ENCODE measurements at regions of chr3 and their contacts with region 1.

Region 1: DNA sequence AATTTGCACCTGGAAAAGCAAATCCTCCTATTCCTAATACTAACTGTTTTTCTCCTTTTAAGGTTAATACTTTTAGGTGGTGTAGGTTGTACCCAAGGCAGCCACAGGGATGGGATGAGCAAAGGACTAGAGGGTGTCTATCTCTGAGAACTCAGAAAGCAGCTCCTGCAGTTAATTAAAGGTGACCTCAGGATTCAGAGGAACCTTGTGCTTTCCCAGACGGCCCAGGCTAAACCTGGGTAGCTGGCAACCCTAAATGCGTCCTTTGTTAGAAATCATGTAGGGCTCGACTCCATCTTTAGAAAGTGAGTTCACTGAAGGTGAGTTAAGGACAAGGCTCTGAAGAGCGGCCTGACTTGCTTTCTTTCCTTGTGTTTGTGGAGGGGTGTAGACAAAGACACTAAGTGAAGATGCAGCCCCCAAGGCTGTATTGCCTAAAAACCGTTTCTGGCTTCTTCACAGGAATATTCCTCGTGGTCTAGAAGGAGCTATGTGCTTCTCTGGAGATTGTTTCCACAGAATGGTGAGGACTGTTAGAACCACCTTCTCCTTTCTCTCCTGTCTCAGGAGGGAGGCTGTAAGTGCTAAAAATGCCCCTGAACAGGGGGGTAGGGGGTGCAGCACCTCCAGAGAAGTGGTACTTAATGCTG is 14.9 kb downstream of the FNDC3B start:
- DNase-seq: no peak
- H3K4me3 ChIP-seq: no peak overlapping the region
- H3K27ac ChIP-seq: peak overlapping the region in 2 of 4 donors; percentile 5 to 15
- H3K4me1 ChIP-seq: peaks cover 51 to 61% (median 56%) of the 10 kb centered on the region in 4 donors
- H3K27me3 ChIP-seq: no peaks in the 10 kb centered on the region
- CTCF ChIP-seq: no peak
- EP300 ChIP-seq: no peak
- POLR2A ChIP-seq: no peak

Region 2: DNA sequence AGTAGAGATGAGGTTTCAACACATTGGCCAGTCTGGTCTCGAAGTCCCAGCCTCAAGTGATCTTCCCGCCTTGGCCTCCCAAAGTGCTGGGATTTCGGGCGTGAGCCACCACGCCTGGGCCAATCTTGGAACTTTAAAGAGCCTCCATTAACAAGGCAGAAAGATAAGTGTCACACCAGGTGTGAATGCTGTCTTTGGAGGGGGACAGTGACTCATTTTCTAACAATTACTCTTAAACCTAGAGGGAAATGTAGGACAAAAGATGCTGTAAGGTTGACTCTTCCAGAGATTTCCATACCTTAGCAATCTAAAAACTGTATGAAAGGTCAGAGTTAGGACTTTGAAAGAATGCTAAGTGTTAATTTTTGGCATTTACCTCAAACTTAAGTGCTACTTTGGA is 70.0 kb after region 1 on chr3:
- intact Hi-C with region 1: loop called (anchors 5 kb)
- DNase-seq: no peak
- H3K4me3 ChIP-seq: no peak overlapping the region
- H3K27ac ChIP-seq: peak overlapping the region in 2 of 4 donors; percentile 79 to 83
- H3K4me1 ChIP-seq: peaks cover 57 to 80% (median 67%) of the 10 kb centered on the region in 4 donors
- H3K27me3 ChIP-seq: no peaks in the 10 kb centered on the region
- CTCF ChIP-seq: no peak
- EP300 ChIP-seq: no peak
- POLR2A ChIP-seq: no peak